ENCODE measurements at regions of chr7 and their contacts with region 1.

Region 1: GRCh38 chr7:51141451-51142003 is 175.1 kb downstream of the COBL start:
- DNase-seq: peak; percentile 13 to 41
- ATAC-seq: peak; percentile 62 to 72; a peak in 5 of 6 replicates
- H3K4me3 ChIP-seq: no peak overlapping the region
- H3K27ac ChIP-seq: no peak overlapping the region
- H3K4me1 ChIP-seq: peaks cover 8% of the 10 kb centered on the region
- CTCF ChIP-seq: peak; percentile 77
- EP300 ChIP-seq: no peak
- POLR2A ChIP-seq: no peak
- RAD21 ChIP-seq: peak; percentile 92 to 93

Region 2: DNA sequence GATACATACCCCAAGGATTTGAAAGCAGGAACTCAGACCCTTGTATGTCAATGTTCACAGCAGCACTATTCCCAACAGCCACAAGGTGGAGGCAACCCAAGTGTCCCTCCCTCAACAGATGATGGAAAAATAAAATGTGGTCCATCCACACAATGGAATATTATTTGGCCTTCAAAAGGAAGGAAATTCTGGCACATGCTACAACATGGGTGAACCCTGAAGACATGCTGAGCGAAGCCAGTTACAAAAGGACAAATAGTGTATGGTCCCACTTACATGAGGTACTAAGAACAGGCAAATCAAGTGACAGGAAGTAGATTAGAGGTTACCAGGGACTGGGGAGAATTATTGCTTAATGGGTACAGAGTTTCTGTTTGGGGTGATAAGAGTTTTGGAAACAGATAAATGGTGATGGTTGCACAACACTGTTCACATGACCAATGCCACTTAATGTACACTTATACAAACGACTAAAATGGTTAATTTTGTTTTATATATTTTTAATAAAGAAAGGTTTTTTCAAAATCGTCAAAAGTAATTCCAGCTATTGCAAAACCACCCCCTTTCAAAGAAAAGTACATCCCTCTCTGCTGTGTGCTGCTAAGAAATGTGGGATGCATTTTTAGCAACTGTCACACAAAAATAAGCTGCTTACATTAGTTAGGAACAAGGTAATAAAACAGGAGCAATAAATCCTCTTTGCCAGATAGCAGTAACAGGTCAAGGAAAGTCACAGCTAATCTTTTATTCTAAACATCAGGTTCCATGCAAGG is 444.5 kb before region 1 on chr7:
- CTCF ChIA-PET with region 1: interaction called, 10 read pairs
- POLR2A ChIA-PET with region 1: no interaction called
- DNase-seq: peak in 1 of 2 experiments; percentile 41
- ATAC-seq: peak; percentile 77; a peak in 4 of 6 replicates
- H3K4me3 ChIP-seq: no peak overlapping the region
- H3K27ac ChIP-seq: no peak overlapping the region
- H3K4me1 ChIP-seq: 0 out of 3 replicates have a peak, but pooled peaks cover 4% of the 10 kb centered on the region
- CTCF ChIP-seq: peak; percentile 49
- EP300 ChIP-seq: no peak
- POLR2A ChIP-seq: no peak
- RAD21 ChIP-seq: peak; percentile 47 to 61

Region 3: GRCh38 chr7:50714839-50715238 is 426.7 kb before region 1 on chr7:
- CTCF ChIA-PET with region 1: interaction called, 14 read pairs
- POLR2A ChIA-PET with region 1: no interaction called
- DNase-seq: peak in 1 of 2 experiments; percentile 35
- ATAC-seq: peak in 1 of 2 experiments; percentile 37; a peak in 2 of 6 replicates
- H3K4me3 ChIP-seq: no peak overlapping the region
- H3K27ac ChIP-seq: 0 out of 6 replicates have a peak overlapping the region, but pooled peaks of 1 of the 2 experiments have one; percentile 20
- H3K4me1 ChIP-seq: peaks cover 52% of the 10 kb centered on the region
- CTCF ChIP-seq: no peak
- EP300 ChIP-seq: no peak
- POLR2A ChIP-seq: no peak
- RAD21 ChIP-seq: no peak

Region 4: GRCh38 chr7:50783801-50784507 is 357.6 kb before region 1 on chr7:
- CTCF ChIA-PET with region 1: interaction called, 12 read pairs
- POLR2A ChIA-PET with region 1: no interaction called
- DNase-seq: no peak
- ATAC-seq: no peak
- H3K4me3 ChIP-seq: no peak overlapping the region
- H3K27ac ChIP-seq: no peak overlapping the region
- H3K4me1 ChIP-seq: peaks cover 17% of the 10 kb centered on the region
- CTCF ChIP-seq: no peak
- EP300 ChIP-seq: no peak
- POLR2A ChIP-seq: no peak
- RAD21 ChIP-seq: no peak

Region 5: GRCh38 chr7:51111241-51111940 is 30.1 kb before region 1 on chr7:
- CTCF ChIA-PET with region 1: no interaction called
- POLR2A ChIA-PET with region 1: no interaction called
- DNase-seq: no peak
- ATAC-seq: no peak
- H3K4me3 ChIP-seq: no peak overlapping the region
- H3K27ac ChIP-seq: no peak overlapping the region
- H3K4me1 ChIP-seq: no peaks in the 10 kb centered on the region
- CTCF ChIP-seq: no peak
- EP300 ChIP-seq: no peak
- POLR2A ChIP-seq: no peak
- RAD21 ChIP-seq: no peak

Region 6: DNA sequence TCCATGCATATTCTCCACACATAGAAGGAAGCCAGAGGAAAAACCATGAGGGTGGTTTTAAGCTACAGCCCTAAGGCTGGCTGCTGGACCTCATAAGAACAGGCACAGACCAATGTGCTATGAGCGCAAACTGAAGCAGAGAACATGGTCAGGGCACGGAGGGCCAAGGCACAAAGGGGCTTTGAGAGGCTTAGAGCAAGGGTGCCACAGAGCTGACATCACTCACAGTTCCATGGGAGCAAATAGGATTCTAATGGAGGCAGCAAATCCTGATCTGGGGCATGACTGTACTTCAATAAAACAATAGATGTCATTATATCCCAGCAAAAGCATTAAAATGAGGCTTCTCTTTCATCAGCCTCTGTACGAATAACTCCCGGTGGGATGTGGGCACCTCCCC is 12.7 kb after region 1 on chr7:
- CTCF ChIA-PET with region 1: interaction called, 54 read pairs
- POLR2A ChIA-PET with region 1: no interaction called
- DNase-seq: no peak
- ATAC-seq: no peak
- H3K4me3 ChIP-seq: no peak overlapping the region
- H3K27ac ChIP-seq: no peak overlapping the region
- H3K4me1 ChIP-seq: no peaks in the 10 kb centered on the region
- CTCF ChIP-seq: no peak
- EP300 ChIP-seq: no peak
- POLR2A ChIP-seq: no peak
- RAD21 ChIP-seq: no peak

Measured in A549 (cell line).